ENCODE measurements at regions of chr7 and their contacts with region 1.

Region 1: DNA sequence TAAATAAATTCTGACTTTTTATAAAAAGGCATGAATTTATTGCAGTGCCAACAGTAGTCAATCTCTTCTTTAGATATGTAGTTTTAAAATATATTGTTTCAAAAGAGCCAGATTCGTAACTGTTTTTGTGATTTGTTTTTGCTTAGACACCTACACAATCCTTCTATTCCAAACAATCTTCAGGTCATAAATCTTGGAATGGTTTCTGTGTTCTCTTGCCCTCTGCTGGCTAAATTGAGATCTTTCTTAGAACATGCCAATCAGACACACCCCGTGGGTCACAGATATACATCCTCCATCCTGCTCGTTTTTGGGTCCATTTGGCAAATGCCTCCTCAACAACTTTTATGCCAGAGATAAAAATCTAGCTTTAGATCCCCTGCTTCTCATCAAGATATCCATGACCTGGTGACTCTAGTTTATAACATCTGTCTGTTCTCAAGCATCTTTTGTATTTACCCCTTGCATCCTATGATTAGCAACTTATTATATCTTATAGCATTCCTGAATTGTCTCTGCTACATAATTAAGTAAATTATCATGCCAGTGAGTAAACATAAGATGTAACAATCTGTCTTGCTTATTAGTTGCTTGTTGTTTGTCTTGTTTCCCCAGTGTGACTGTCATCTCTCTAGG is 35.3 kb upstream of the IFRD1 start:
- DNase-seq: no peak
- ATAC-seq: peak; percentile 60

Region 2: DNA sequence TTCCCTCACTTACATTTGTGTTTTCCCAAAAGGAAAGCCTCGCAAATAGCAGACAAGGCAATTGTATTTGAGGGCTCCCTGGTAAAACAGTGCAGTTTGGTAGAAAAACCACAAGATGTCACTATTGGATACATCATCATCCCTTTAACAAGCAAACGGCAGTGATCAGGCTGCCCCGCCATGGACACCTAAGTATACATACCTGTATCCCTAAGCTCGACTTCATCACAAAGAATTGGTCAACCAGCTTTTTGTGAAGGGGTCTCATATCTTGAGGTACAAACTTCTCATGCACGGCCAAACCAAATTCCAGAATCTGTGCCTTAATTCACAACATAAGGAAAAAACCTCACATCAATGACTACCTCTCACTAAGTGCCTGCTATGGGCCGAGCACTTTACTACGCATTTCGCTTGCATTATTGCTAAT is 673.1 kb before region 1 on chr7:
- intact Hi-C with region 1: loop called (anchors 10 kb)
- DNase-seq: peak; percentile 45
- ATAC-seq: peak; percentile 65

Region 3: GRCh38 chr7:113040849-113041248 is 625.9 kb after region 1 on chr7:
- intact Hi-C with region 1: no loop called
- DNase-seq: no peak
- ATAC-seq: no peak